ENCODE measurements at regions of chr2 and their contacts with region 1.

Region 1: GRCh38 chr2:26064846-26065245 is 31.0 kb downstream of the RAB10 start:
- DNase-seq: no peak

Region 2: GRCh38 chr2:26011990-26012856 is 52.6 kb before region 1 on chr2:
- in situ Hi-C with region 1: loop called (anchors 5 kb)
- DNase-seq: peak; percentile 96

Region 3: DNA sequence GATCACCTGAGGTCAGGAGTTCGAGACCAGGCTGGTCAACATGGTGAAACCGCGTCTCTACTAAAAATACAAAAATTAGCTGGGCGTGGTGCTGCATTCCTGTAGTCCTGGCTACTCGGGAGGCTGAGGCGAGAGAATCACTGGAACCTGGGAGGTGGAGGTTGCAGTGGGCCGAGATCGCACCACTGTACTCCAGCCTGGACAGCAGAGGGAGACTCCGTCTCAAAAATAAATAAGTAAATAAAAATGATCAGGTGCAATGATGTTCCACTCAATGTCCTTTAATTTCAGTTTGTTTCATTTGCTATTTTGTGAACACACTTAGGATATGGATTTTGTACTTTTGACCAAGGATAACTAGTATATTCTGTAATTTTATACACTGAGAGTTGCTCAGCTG is 170.2 kb after region 1 on chr2:
- in situ Hi-C with region 1: no loop called
- DNase-seq: no peak